Naive thymus-derived CD4-positive, alpha-beta T cell (primary cell): ENCODE measurements at regions of chr15 and their contacts with region 1.

Region 1: DNA sequence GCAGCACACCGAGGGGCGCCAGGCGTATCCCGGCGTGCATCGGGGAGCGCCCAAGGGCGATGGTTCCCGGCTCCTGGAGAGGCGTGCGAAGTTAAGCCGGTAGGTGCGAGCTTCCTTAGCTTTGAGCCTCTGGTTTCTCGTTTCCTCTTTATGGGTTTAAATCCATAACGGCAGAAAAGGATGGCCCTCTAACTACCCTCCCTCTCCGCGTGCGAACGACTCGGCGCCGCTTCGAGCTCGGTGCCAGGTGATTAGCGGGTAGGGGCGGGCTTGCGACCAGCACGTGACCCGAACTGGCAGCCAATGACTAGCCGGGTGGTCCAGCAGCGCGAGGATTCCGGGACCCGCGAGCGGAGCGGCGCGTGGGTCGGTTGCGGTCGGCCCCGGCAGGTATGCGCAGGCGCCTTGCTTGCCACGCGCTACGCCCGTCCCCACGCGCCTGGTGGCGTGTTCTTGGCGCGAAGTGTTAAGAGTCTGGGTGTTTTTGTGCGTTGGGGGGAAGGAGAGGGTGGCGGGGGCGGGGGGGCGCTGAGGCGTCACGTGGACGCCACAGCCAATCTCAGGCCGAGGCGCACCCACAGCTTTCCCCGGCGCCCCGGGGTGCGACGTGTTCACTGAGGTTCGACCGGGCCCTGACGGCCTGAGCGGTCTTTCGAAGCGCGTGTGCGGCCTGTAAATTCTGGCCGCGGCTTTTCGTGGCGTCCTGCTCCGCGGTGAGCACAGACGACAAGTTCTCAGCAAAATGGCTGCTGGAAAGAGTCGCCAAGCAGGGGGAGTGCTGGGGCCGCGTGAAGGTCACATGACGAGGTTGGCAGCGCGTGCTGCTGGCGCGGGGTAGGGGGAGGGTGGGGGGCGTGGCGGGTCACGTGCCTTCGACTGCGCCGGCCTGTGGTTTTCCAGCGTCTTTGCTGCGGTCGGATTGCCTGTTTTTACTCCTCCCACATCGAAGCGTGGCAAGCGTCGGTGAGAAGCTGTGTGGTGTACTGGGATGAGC is 38.7 kb upstream of the MGA start:
- DNase-seq: peak; percentile 56 to 81 (median 78)
- ATAC-seq: peak; percentile 87
- H3K4me3 ChIP-seq: peak overlapping the region; percentile 67
- H3K4me3 Mint-ChIP-seq: peak overlapping the region; percentile 55 to 87 (median 78)
- H3K27ac ChIP-seq: peak overlapping the region; percentile 41
- H3K27ac Mint-ChIP-seq: peak overlapping the region; percentile 68 to 87 (median 77)
- H3K4me1 ChIP-seq: peaks cover 5 to 8% of the 10 kb centered on the region in 2 donors
- H3K4me1 Mint-ChIP-seq: peaks cover 5 to 29% (median 18%) of the 10 kb centered on the region in 7 donors
- H3K27me3 ChIP-seq: no peaks in the 10 kb centered on the region
- H3K27me3 Mint-ChIP-seq: peaks cover 0 to 29% (median 0%) of the 10 kb centered on the region in 5 donors

Region 2: DNA sequence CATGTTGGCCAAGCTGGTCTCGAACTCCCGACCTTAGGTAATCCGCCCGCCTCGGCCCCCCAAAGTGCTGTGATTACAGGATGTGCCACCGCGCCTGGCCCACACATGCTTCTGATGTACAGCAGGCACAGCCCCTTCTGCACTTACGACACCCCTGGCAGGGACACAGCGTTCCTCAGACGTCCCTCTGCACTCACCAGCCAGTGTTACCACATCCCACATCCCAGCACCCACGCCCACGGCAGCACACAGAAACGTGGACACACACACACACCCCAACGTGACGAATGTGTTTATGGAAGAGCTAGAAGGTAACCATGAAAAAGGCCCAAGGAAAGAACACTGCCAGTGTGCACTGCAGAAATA is 76.9 kb before region 1 on chr15:
- CTCF ChIA-PET with region 1: no interaction called
- POLR2A ChIA-PET with region 1: no interaction called
- intact Hi-C with region 1: loop called in 1 of 2 experiments (anchors 2 kb)
- DNase-seq: peak in 1 of 9 donors; percentile 1
- ATAC-seq: no peak
- H3K4me3 ChIP-seq: peak overlapping the region; percentile 96
- H3K4me3 Mint-ChIP-seq: peak overlapping the region; percentile 92 to 96 (median 94)
- H3K27ac ChIP-seq: peak overlapping the region; percentile 94
- H3K27ac Mint-ChIP-seq: peak overlapping the region in 8 of 9 donors; percentile 62 to 95 (median 92)
- H3K4me1 ChIP-seq: peaks cover 0 to 6% of the 10 kb centered on the region in 2 donors
- H3K4me1 Mint-ChIP-seq: peaks cover 0 to 31% (median 19%) of the 10 kb centered on the region in 7 donors
- H3K27me3 ChIP-seq: no peaks in the 10 kb centered on the region
- H3K27me3 Mint-ChIP-seq: peaks cover 0 to 4% (median 0%) of the 10 kb centered on the region in 5 donors

Region 3: DNA sequence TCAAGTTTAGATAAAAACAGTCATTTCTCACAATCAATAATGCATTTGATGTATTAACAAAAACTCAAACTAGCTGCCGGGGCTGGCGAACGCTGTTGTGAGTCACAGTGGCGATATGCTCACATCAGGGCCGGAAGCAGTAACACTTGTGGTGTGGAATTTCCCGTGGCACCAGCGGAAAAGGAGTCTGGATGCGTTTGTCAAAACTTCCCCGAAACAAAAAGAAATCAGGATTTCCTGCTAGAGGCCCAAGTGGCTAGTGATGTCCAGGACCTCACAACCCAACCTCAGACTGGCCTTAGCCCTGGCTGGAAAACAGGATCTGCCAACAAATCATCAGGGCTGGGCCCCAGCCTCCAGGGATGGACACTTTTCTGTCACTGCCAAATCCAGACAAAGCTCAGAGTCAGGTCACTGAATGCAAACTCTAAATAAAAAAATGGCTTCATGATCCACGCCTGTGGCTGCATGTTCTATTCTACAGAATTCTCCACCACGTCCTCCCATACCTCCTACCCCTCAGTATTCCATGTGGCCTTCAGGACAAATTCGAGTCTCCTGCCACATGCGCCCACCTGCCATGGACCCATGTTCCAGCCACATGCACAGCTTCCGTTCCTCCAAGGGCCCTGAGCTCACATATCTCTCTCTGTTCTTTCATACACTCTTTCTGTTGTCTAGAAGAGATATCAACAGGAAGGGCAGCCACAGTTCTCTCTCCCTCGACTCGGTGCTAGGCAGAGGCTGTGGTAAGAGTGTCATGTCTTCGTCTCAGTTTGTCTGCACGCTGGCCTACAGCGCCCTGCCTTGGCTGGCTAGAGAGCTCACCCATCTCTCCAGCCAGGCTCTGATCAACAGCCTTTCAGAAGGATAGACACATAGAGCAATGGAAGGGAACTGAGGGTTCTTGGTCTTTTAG is 315.4 kb after region 1 on chr15:
- CTCF ChIA-PET with region 1: no interaction called
- POLR2A ChIA-PET with region 1: no interaction called
- intact Hi-C with region 1: loop called in 1 of 2 experiments (anchors 5 kb)
- DNase-seq: peak; percentile 39 to 85 (median 79)
- ATAC-seq: peak; percentile 86
- H3K4me3 ChIP-seq: peak overlapping the region; percentile 36
- H3K4me3 Mint-ChIP-seq: peak overlapping the region; percentile 63 to 89 (median 82)
- H3K27ac ChIP-seq: peak overlapping the region; percentile 83
- H3K27ac Mint-ChIP-seq: peak overlapping the region; percentile 93 to 100 (median 98)
- H3K4me1 ChIP-seq: peaks cover 50 to 53% of the 10 kb centered on the region in 2 donors
- H3K4me1 Mint-ChIP-seq: peaks cover 41 to 72% (median 65%) of the 10 kb centered on the region in 7 donors
- H3K27me3 ChIP-seq: no peaks in the 10 kb centered on the region
- H3K27me3 Mint-ChIP-seq: no peaks in the 10 kb centered on the region